Dorsolateral prefrontal cortex (tissue), 120 donors: ENCODE measurements at regions of chr18 and their contacts with region 1.

Region 1: DNA sequence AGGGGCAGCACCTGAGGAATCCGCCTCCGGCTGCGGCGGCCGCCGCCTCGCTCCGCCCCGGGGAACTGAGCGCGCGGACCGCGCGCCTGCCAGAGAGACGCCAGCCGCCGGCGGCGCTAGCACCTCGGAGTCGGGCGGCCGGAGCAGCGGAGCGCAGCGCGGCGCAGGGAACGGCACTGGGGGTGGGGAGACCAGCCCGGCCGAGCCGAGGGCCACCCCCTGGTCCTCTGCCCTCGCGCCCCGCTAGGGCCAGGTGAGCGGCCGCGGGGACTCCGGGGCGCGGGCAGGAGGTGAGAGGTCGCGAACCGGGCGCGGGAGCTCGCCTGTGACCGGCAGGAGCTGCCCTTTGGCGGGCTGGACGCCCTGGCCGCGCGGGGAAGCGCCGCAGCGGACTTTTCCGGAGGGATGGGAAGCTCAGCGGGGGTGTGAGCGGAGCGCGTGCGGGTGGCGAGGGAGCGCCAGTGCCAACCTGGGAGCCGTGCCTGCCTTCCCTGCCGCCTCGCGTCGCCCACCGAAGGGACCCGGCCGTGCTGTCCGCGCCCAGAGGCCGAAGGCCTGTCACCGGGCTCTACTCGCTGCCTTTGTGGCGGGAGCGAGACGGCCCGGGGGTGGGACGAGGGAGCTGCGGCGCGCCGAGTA is at the start of gene GREB1L:
- DNase-seq: peak in 9 of 10 donors; percentile 20 to 80 (median 54)
- H3K4me3 ChIP-seq: peak within 1 kb of the TSS; percentile 40 to 86 (median 70)
- H3K27ac ChIP-seq: peak within 1 kb of the TSS in 32 of 59 donors; percentile 8 to 85 (median 58)
- H3K27me3 ChIP-seq: peaks cover 0 to 39% (median 13%) of the 10 kb centered on the region in 45 donors
- CTCF ChIP-seq: peak in 42 of 56 donors; percentile 11 to 69 (median 47)
- total RNA-seq, gene GREB1L: 2.6 to 22.9 (median 7.8) TPM

Region 2: GRCh38 chr18:21179590-21180220 is 62.6 kb before region 1 on chr18:
- intact Hi-C with region 1: no loop called
- DNase-seq: peak in 2 of 10 donors; percentile 33 to 39
- H3K4me3 ChIP-seq: no peak overlapping the region
- H3K27ac ChIP-seq: peak overlapping the region in 1 of 59 donors; percentile 5
- H3K27me3 ChIP-seq: no peaks in the 10 kb centered on the region
- CTCF ChIP-seq: peak; percentile 51 to 81 (median 67)

Region 3: GRCh38 chr18:21203096-21203495 is 39.2 kb before region 1 on chr18:
- intact Hi-C with region 1: loop called in 1 of 2 experiments (anchors 5 kb)
- DNase-seq: no peak
- H3K4me3 ChIP-seq: no peak overlapping the region
- H3K27ac ChIP-seq: no peak overlapping the region
- H3K27me3 ChIP-seq: peaks cover 0 to 8% (median 0%) of the 10 kb centered on the region in 45 donors
- CTCF ChIP-seq: no peak

Region 4: DNA sequence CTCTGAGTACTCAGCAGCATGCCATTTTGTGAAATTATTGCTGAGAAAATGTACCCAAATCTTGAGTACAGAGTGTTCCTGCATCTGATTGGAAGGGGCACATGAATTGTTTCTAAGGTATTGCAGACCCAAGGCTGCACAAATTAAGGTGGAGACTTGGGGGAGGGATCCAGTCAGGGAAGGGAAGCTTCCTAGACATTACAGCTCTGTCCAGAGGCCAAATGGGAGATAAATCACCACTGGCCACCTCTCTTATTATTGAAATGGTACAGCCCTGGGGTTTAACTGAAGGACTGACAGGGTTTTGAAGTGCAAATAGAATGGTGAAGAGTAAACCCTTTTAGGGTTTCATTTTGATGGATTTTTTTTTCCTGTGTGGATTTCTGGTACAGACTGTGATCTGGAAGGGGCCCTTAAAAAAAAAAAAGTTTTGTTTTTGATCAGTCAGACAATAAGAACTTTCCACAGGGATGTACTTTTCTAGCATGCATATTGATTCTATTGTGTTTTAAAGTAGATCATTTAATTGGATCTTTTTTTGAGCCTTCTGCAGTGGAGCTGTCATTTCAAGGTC is 119.1 kb after region 1 on chr18:
- intact Hi-C with region 1: loop called (anchors 5 kb)
- DNase-seq: no peak
- H3K4me3 ChIP-seq: no peak overlapping the region
- H3K27ac ChIP-seq: peak overlapping the region in 3 of 59 donors; percentile 18 to 57 (median 27)
- H3K27me3 ChIP-seq: peaks cover 0 to 3% (median 0%) of the 10 kb centered on the region in 45 donors
- CTCF ChIP-seq: no peak

Region 5: GRCh38 chr18:21369146-21369545 is 126.9 kb after region 1 on chr18:
- intact Hi-C with region 1: loop called (anchors 5 kb)
- DNase-seq: no peak
- H3K4me3 ChIP-seq: no peak overlapping the region
- H3K27ac ChIP-seq: no peak overlapping the region
- H3K27me3 ChIP-seq: peaks cover 0 to 3% (median 0%) of the 10 kb centered on the region in 45 donors
- CTCF ChIP-seq: no peak

Region 6: DNA sequence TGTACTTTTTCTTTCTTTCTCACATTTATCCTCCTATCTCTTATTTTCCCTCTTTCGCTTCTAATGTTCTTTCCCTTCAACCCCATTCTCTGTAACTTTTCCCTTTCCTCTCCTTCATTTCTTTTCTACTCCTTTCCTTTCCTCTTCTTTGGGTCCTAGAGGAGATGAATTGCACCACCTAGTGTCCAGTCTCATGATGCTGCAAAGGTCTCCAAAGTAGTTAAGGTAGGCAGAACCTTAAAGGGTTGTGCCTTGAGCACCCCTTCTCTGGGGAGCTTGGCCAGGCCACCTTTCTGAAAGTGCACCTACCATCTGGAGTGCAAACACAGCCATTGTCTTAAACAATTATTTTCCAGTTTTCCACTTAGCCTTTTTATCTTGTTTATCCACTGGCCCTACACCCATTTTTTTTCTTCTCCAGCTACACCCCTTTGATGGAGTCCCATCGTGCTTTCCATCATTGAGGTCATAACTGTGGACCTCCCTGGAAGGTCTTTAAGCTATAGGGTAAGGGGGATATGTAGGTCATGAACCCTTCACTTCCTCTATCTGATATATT is 202.3 kb after region 1 on chr18:
- intact Hi-C with region 1: loop called (anchors 2 to 5 kb)
- DNase-seq: peak in 2 of 10 donors; percentile 28 to 33
- H3K4me3 ChIP-seq: no peak overlapping the region
- H3K27ac ChIP-seq: no peak overlapping the region
- H3K27me3 ChIP-seq: peaks cover 0 to 5% (median 0%) of the 10 kb centered on the region in 45 donors
- CTCF ChIP-seq: peak; percentile 35 to 88 (median 71)

Region 7: GRCh38 chr18:21600526-21601410 is 358.5 kb after region 1 on chr18 and contains the start of gene ESCO1:
- intact Hi-C with region 1: loop called in 1 of 2 experiments (anchors 10 kb)
- DNase-seq: peak; percentile 81 to 96 (median 91)
- H3K4me3 ChIP-seq: peak within 1 kb of the TSS; percentile 63 to 100 (median 96)
- H3K27ac ChIP-seq: peak within 1 kb of the TSS; percentile 25 to 99 (median 93)
- H3K27me3 ChIP-seq: no peaks in the 10 kb centered on the region
- CTCF ChIP-seq: peak; percentile 85 to 99 (median 96)
- total RNA-seq, gene ESCO1: 13.0 to 29.8 (median 18.0) TPM

Region 8: DNA sequence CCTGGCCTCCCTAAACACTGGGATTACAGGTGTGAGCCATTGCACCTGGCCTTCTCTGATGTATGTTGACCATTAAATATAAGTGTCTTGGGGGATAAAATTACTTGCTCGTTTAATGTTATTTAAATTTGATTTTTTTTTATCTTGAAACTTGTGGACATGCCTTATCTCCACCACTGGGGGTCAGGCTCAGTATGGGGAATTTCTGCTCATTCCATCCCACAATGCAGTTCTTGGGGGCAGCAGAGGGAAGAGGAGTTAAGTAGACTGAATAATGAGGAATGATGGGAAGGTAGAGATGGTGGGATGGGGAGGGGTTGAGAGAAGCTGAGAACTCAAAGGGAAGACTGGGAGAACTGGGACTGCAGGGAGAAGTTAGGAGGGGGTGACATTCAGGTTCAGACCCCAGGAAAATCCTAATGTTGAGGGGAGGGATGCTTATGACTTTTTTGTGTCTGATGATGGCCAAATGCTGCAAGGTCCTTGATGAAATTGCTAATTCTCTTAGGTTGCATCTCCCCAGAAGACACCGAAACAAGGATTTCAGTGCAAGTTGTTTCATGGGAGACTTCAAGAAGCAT is 672.6 kb after region 1 on chr18:
- intact Hi-C with region 1: no loop called
- DNase-seq: no peak
- H3K4me3 ChIP-seq: no peak overlapping the region
- H3K27ac ChIP-seq: no peak overlapping the region
- H3K27me3 ChIP-seq: peaks cover 0 to 6% (median 0%) of the 10 kb centered on the region in 45 donors
- CTCF ChIP-seq: peak in 51 of 56 donors; percentile 13 to 62 (median 41)